PC-9 (cell line): ENCODE measurements at regions of chr12 and their contacts with region 1.

Region 1: DNA sequence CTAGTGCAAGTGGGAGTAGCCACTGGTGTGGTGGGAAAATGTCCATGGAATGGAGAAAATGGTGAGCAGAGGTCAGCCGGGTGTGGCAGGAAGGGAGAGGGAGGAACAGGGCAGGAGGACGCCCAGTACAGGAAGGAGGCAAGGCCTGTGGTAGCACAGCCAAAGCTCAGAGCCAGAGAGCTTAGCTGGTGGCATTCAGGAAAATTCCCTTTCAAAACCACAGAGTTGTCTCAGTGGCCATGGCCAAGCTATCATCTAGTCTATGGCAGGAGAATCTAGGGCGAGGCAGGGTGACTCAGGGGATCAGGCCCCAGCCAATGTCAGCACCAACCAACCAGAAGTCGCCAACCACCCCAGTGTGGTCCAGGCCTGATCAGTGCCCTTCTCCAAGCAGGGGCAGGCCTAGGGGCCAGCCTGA is 67.7 kb upstream of the DDX11 start:
- DNase-seq: peak; percentile 95 to 96
- H3K4me3 ChIP-seq: no peak overlapping the region
- H3K27ac ChIP-seq: peak overlapping the region; percentile 95
- H3K4me1 ChIP-seq: peaks cover 67% of the 10 kb centered on the region
- H3K27me3 ChIP-seq: no peaks in the 10 kb centered on the region
- CTCF ChIP-seq: no peak

Region 2: GRCh38 chr12:30795410-30796312 is 210.3 kb before region 1 on chr12:
- CTCF ChIA-PET with region 1: no interaction called
- POLR2A ChIA-PET with region 1: interaction called, 13 read pairs
- intact Hi-C with region 1: no loop called
- DNase-seq: peak; percentile 67 to 78
- H3K4me3 ChIP-seq: peak overlapping the region; percentile 82
- H3K27ac ChIP-seq: peak overlapping the region; percentile 94
- H3K4me1 ChIP-seq: peaks cover 55% of the 10 kb centered on the region
- H3K27me3 ChIP-seq: no peaks in the 10 kb centered on the region
- CTCF ChIP-seq: no peak

Region 3: GRCh38 chr12:30965613-30965985 is 40.4 kb before region 1 on chr12:
- CTCF ChIA-PET with region 1: no interaction called
- POLR2A ChIA-PET with region 1: no interaction called
- intact Hi-C with region 1: no loop called
- DNase-seq: peak in 1 of 2 experiments; percentile 49
- H3K4me3 ChIP-seq: no peak overlapping the region
- H3K27ac ChIP-seq: no peak overlapping the region
- H3K4me1 ChIP-seq: peaks cover 10% of the 10 kb centered on the region
- H3K27me3 ChIP-seq: peaks cover 9% of the 10 kb centered on the region; the same call in 1 of the 2 replicates
- CTCF ChIP-seq: peak; percentile 70

Region 4: GRCh38 chr12:31029916-31030562 is 24.1 kb after region 1 on chr12:
- CTCF ChIA-PET with region 1: no interaction called
- POLR2A ChIA-PET with region 1: interaction called, 15 read pairs
- intact Hi-C with region 1: loop called (anchors 2 kb)
- DNase-seq: peak in 1 of 2 experiments; percentile 64
- H3K4me3 ChIP-seq: no peak overlapping the region
- H3K27ac ChIP-seq: no peak overlapping the region
- H3K4me1 ChIP-seq: peaks cover 59% of the 10 kb centered on the region
- H3K27me3 ChIP-seq: no peaks in the 10 kb centered on the region
- CTCF ChIP-seq: no peak

Region 5: GRCh38 chr12:31339831-31340622 is 334.1 kb after region 1 on chr12:
- CTCF ChIA-PET with region 1: no interaction called
- POLR2A ChIA-PET with region 1: interaction called, 22 read pairs
- intact Hi-C with region 1: no loop called
- DNase-seq: peak; percentile 60 to 70
- H3K4me3 ChIP-seq: no peak overlapping the region; the same call in 1 of the 2 replicates
- H3K27ac ChIP-seq: peak overlapping the region; percentile 25; the same call in 1 of the 2 replicates
- H3K4me1 ChIP-seq: peaks cover 15% of the 10 kb centered on the region
- H3K27me3 ChIP-seq: no peaks in the 10 kb centered on the region
- CTCF ChIP-seq: no peak

Region 6: DNA sequence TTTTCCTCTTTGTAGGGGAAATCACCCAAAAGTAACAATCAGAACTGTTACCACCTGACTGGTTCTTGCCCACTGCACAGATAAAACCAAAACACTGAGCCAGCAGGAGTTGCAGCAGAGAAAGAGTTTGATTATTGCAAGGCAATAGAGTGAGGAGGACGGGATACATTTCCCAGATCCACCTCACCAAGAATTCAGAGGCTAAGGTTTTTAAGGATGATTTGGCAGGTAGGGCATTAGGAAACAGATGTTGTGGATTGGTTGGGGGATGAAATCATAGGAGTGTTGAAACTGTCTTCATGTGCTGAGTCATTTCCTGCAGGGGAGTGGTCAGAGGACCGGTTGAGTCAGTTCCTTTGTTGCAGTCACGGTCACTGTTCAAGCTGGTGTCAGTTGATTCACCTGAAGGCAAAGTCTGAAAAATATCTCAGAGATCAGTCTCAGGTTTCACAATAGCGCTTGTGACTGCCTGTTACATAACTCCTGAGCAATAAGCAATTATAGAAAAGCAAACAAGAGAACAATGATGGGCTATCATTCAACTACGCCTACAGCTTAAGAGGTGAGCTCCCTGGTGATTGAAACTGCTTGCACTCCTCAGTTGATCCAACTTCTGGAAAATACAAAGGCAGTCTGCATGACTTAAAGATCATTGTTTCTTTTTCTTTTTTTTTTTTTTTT is 743.2 kb after region 1 on chr12:
- CTCF ChIA-PET with region 1: no interaction called
- POLR2A ChIA-PET with region 1: interaction called, 12 read pairs
- intact Hi-C with region 1: no loop called
- DNase-seq: peak; percentile 83 to 98
- H3K4me3 ChIP-seq: peak overlapping the region; percentile 5; the same call in 1 of the 2 replicates
- H3K27ac ChIP-seq: peak overlapping the region; percentile 89
- H3K4me1 ChIP-seq: peaks cover 29% of the 10 kb centered on the region
- H3K27me3 ChIP-seq: no peaks in the 10 kb centered on the region
- CTCF ChIP-seq: no peak